ENCODE measurements at regions of chr18 and their contacts with region 1.

Region 1: GRCh38 chr18:51029694-51030536 is at the start of gene SMAD4:
- H3K4me3 ChIP-seq: peak within 1 kb of the TSS; percentile 87
- H3K27ac ChIP-seq: peak within 1 kb of the TSS; percentile 100
- H3K4me1 ChIP-seq: peaks cover 23% of the 10 kb centered on the region
- CTCF ChIP-seq: peak; percentile 42; the same call in 1 of the 2 replicates

Region 2: GRCh38 chr18:50836521-50836957 is 193.4 kb before region 1 on chr18:
- CTCF ChIA-PET with region 1: no interaction called
- POLR2A ChIA-PET with region 1: interaction called, 15 read pairs
- H3K4me3 ChIP-seq: no peak overlapping the region
- H3K27ac ChIP-seq: no peak overlapping the region
- H3K4me1 ChIP-seq: no peaks in the 10 kb centered on the region
- CTCF ChIP-seq: no peak

Region 3: GRCh38 chr18:50878345-50879301 is 151.3 kb before region 1 on chr18 and contains the start of gene ME2:
- CTCF ChIA-PET with region 1: interaction called, 3 read pairs
- POLR2A ChIA-PET with region 1: interaction called, 13 read pairs
- H3K4me3 ChIP-seq: peak within 1 kb of the TSS; percentile 58
- H3K27ac ChIP-seq: peak within 1 kb of the TSS; percentile 96
- H3K4me1 ChIP-seq: peaks cover 15% of the 10 kb centered on the region
- CTCF ChIP-seq: no peak; the same call in 1 of the 2 replicates

Region 4: GRCh38 chr18:51051105-51051712 is 21.3 kb after region 1 on chr18:
- CTCF ChIA-PET with region 1: interaction called, 19 read pairs
- POLR2A ChIA-PET with region 1: interaction called, 60 read pairs
- H3K4me3 ChIP-seq: no peak overlapping the region
- H3K27ac ChIP-seq: no peak overlapping the region
- H3K4me1 ChIP-seq: no peaks in the 10 kb centered on the region
- CTCF ChIP-seq: peak; percentile 39; the same call in 1 of the 2 replicates

Region 5: DNA sequence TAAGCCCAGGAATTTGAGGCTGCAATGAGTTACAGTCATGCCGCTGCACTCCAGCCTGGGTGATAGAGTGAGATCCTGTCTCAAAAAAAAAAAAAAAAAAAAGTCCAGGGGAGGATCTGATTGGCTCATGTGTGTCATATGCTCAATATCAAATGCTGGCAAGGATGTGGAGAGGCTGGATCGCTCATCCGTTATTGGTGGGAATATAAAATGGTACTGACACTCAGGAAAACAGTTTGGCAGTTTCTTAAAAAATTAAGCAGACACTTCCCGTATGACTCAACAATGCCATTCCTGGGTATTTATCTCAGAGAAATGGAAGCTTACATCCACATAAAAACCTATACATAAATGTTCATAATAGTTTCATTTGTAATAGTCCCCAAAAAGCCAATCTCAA is 98.6 kb after region 1 on chr18:
- CTCF ChIA-PET with region 1: no interaction called
- POLR2A ChIA-PET with region 1: no interaction called
- H3K4me3 ChIP-seq: no peak overlapping the region
- H3K27ac ChIP-seq: no peak overlapping the region
- H3K4me1 ChIP-seq: no peaks in the 10 kb centered on the region
- CTCF ChIP-seq: no peak

Measured in HEK293 (cell line).